ENCODE measurements at regions of chr15 and their contacts with region 1.

Region 1: DNA sequence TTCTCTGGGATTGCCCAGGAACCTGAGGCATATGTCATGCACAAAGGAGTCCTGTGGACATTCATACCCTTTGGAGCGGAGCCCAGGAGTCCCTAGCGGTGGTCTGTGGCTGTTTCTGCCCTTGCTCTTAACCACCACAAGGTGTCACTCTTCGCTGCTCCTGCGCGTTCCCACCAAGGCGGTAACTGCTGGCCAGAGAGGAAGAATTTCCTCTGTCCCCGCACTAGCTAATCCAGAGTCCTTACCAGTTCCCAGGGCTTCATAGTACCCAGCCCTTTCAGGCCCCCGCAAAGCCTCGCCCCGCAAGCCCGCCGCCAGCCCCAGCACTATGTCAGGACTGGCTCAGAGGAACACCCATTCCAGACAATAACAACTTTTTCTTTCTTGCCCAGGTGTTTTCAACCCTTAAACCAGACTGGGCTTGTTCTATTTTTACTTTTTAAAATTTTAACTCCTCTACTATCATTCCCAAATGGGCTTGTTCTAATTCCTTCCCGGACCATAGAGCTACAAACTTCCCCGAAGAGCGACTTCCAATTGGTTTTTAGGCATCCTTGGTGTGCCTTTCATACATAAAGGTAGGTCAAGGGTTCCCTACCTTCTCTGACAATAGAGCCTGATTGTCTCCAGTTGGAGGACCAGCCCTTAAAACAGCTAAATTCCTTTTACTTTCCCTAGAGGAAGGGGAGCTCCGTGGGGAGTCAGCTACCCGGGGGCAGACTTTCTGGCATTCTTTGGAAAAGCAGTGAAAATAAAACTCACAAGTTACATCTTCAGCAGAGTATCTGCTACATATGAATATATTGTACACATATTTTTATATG is 31.8 kb upstream of the ZNF774 start:
- DNase-seq: peak; percentile 92
- H3K4me3 Mint-ChIP-seq: peak overlapping the region; percentile 2
- H3K27ac Mint-ChIP-seq: peak overlapping the region; percentile 89
- H3K4me1 Mint-ChIP-seq: peaks cover 19% of the 10 kb centered on the region
- H3K27me3 Mint-ChIP-seq: no peaks in the 10 kb centered on the region
- CTCF ChIP-seq: peak; percentile 98

Region 2: GRCh38 chr15:90234096-90234988 is 85.9 kb before region 1 on chr15 and contains the start of gene GDPGP1:
- CTCF ChIA-PET with region 1: no interaction called
- POLR2A ChIA-PET with region 1: no interaction called
- intact Hi-C with region 1: no loop called
- DNase-seq: peak; percentile 33
- H3K4me3 Mint-ChIP-seq: peak within 1 kb of the TSS; percentile 85
- H3K27ac Mint-ChIP-seq: peak within 1 kb of the TSS; percentile 12
- H3K4me1 Mint-ChIP-seq: peaks cover 19% of the 10 kb centered on the region
- H3K27me3 Mint-ChIP-seq: no peaks in the 10 kb centered on the region
- CTCF ChIP-seq: no peak
- total RNA-seq, gene GDPGP1: 3.4 and 6.6 TPM in 2 replicates

Region 3: DNA sequence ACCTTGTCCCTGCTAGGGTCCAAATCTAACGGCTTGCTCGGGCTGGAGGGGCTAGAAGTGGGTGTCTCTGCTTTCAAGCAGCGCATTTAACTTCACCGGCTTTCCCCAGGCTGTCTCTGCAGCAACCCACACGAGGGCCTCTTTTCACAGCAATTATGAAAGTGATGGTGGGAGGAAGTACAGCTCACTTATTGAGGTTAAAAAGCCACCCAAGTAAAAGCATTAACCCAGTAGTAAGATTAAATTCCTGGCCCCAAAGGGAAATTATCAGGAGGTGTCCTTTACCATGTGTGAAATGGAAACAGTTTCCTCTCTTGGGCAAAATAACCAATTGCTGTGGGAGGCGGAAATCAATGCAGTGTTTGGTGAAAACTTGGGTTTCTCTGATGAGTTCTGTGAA is 13.7 kb before region 1 on chr15:
- CTCF ChIA-PET with region 1: interaction called, 25 read pairs
- POLR2A ChIA-PET with region 1: interaction called, 5 read pairs
- intact Hi-C with region 1: no loop called
- DNase-seq: no peak
- H3K4me3 Mint-ChIP-seq: no peak overlapping the region
- H3K27ac Mint-ChIP-seq: no peak overlapping the region
- H3K4me1 Mint-ChIP-seq: peaks cover under 1% of the 10 kb centered on the region
- H3K27me3 Mint-ChIP-seq: peaks cover 4% of the 10 kb centered on the region
- CTCF ChIP-seq: no peak

Region 4: GRCh38 chr15:90387537-90388461 is 67.5 kb after region 1 on chr15 and contains the start of gene IQGAP1:
- CTCF ChIA-PET with region 1: interaction called, 4 read pairs
- POLR2A ChIA-PET with region 1: interaction called, 4 read pairs
- intact Hi-C with region 1: loop called (anchors 2 kb)
- DNase-seq: peak; percentile 96
- H3K4me3 Mint-ChIP-seq: peak within 1 kb of the TSS; percentile 96
- H3K27ac Mint-ChIP-seq: peak within 1 kb of the TSS; percentile 96
- H3K4me1 Mint-ChIP-seq: peaks cover 43% of the 10 kb centered on the region
- H3K27me3 Mint-ChIP-seq: no peaks in the 10 kb centered on the region
- CTCF ChIP-seq: no peak
- total RNA-seq, gene IQGAP1: 264 and 284 TPM in 2 replicates

Region 5: DNA sequence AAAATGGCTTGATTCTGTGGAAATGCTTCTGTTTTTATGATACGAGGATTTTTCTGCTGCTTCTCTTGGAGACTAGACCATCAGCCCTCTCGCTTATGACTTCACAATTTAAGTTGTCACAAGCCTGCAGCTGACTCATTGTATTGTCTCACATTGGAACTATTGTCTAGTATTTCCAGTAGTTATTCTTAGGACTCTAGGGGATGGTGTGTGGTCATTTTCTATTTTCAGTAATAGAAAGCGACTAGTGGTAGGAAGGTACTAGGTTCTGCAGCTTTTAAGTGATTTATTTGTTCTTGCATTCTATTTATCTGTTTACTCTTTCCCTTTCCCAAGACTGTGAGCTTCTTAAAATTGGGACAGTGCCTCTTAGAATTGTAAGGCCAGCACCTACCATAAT is 143.1 kb after region 1 on chr15:
- CTCF ChIA-PET with region 1: interaction called, 18 read pairs
- POLR2A ChIA-PET with region 1: no interaction called
- intact Hi-C with region 1: loop called (anchors 5 kb)
- DNase-seq: peak; percentile 40
- H3K4me3 Mint-ChIP-seq: no peak overlapping the region
- H3K27ac Mint-ChIP-seq: peak overlapping the region; percentile 5
- H3K4me1 Mint-ChIP-seq: peaks cover 28% of the 10 kb centered on the region
- H3K27me3 Mint-ChIP-seq: no peaks in the 10 kb centered on the region
- CTCF ChIP-seq: no peak

Region 6: DNA sequence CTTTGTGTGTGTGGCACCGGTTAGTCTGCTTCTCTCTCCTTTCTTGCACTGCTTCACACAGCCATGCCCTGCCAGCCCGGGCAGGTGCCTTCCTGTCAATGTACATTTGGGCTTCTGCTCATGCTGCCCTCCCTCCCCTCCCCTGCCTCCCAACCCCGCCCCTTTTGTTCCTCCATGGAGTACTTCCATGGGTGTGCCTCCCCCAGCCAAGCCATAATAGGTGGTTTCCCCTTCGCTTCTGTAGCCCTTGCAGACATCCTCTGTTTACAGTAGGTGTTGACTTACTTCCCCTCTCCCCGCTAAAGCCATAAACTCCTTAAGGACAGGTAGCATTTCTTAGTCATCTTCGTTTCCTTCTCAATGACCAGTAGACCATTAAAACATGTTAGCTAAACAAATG is 177.6 kb after region 1 on chr15:
- CTCF ChIA-PET with region 1: interaction called, 17 read pairs
- POLR2A ChIA-PET with region 1: no interaction called
- intact Hi-C with region 1: no loop called
- DNase-seq: no peak
- H3K4me3 Mint-ChIP-seq: no peak overlapping the region
- H3K27ac Mint-ChIP-seq: no peak overlapping the region
- H3K4me1 Mint-ChIP-seq: no peaks in the 10 kb centered on the region
- H3K27me3 Mint-ChIP-seq: no peaks in the 10 kb centered on the region
- CTCF ChIP-seq: no peak

Region 7: GRCh38 chr15:90886041-90886614 is 565.9 kb after region 1 on chr15:
- CTCF ChIA-PET with region 1: interaction called, 5 read pairs
- POLR2A ChIA-PET with region 1: no interaction called
- intact Hi-C with region 1: loop called (anchors 1 kb)
- DNase-seq: peak; percentile 55
- H3K4me3 Mint-ChIP-seq: no peak overlapping the region
- H3K27ac Mint-ChIP-seq: no peak overlapping the region
- H3K4me1 Mint-ChIP-seq: no peaks in the 10 kb centered on the region
- H3K27me3 Mint-ChIP-seq: no peaks in the 10 kb centered on the region
- CTCF ChIP-seq: peak; percentile 98